ENCODE measurements at regions of chr3 and their contacts with region 1.

Region 1: GRCh38 chr3:122101646-122102045 is 46.5 kb downstream of the CD86 start:
- DNase-seq: no peak
- H3K4me3 ChIP-seq: no peak overlapping the region
- H3K27ac ChIP-seq: no peak overlapping the region
- H3K4me1 ChIP-seq: 0 out of 7 replicates have a peak, but pooled peaks cover 0 to 2% (median 0%) of the 10 kb centered on the region in 4 experiments
- H3K27me3 ChIP-seq: no peaks in the 10 kb centered on the region
- CTCF ChIP-seq: peak in 2 of 3 experiments; percentile 73 to 80; a peak in 3 of 4 replicates
- EP300 ChIP-seq: no peak
- POLR2A ChIP-seq: no peak
- RAD21 ChIP-seq: peak; percentile 93 to 94

Region 2: DNA sequence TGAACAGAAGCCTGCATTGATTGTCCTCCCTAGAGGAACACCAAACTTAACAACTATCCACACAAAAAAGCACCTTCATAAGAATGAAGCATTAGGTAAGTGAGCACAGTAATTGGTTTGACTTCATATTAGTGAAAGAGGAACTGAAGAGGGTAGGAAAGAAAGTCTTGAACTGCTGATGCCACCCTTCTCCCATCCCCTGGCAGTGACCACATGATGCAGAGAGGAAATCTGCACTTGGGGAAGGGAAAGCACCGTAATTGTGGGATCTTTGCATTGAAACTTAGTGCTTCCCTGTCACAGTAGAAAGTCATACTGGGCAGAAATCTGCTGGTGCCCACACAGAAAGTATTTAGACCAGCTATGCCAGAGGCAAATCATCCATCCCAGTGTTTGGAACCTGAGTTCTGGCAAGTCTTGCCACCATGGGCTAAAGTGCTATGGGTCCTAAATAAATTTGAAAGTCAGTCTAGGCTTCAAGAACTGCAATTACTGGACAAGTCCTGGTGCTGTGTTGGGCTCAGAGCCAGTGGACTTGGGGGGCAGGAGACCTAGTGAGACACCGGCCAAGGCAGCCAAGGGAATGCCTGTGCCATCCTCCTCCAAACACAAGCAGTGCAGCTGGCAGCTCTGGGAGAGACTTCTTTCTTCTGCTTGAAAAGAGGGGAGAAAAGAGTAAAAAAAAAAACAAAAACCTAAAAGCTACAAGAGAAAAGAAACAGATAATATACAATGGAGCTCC is 143.8 kb before region 1 on chr3:
- CTCF ChIA-PET with region 1: no interaction called
- POLR2A ChIA-PET with region 1: no interaction called
- DNase-seq: no peak
- H3K4me3 ChIP-seq: no peak overlapping the region
- H3K27ac ChIP-seq: no peak overlapping the region
- H3K4me1 ChIP-seq: peaks cover 0 to 4% (median 2%) of the 10 kb centered on the region in 4 experiments; a peak in 2 of 7 replicates
- H3K27me3 ChIP-seq: no peaks in the 10 kb centered on the region
- CTCF ChIP-seq: no peak
- EP300 ChIP-seq: no peak
- POLR2A ChIP-seq: no peak
- RAD21 ChIP-seq: no peak

Region 3: GRCh38 chr3:122111974-122112373 is 10.3 kb after region 1 on chr3:
- CTCF ChIA-PET with region 1: interaction called, 16 read pairs
- POLR2A ChIA-PET with region 1: no interaction called
- DNase-seq: no peak
- H3K4me3 ChIP-seq: no peak overlapping the region
- H3K27ac ChIP-seq: no peak overlapping the region
- H3K4me1 ChIP-seq: no peaks in the 10 kb centered on the region
- H3K27me3 ChIP-seq: no peaks in the 10 kb centered on the region
- CTCF ChIP-seq: no peak
- EP300 ChIP-seq: no peak
- POLR2A ChIP-seq: no peak
- RAD21 ChIP-seq: no peak

Region 4: GRCh38 chr3:122258757-122259371 is 157.2 kb after region 1 on chr3:
- CTCF ChIA-PET with region 1: interaction called, 113 read pairs
- POLR2A ChIA-PET with region 1: no interaction called
- DNase-seq: peak; percentile 46 to 61
- H3K4me3 ChIP-seq: no peak overlapping the region
- H3K27ac ChIP-seq: no peak overlapping the region
- H3K4me1 ChIP-seq: peaks cover 0 to 2% (median 0%) of the 10 kb centered on the region in 4 experiments; a peak in 1 of 7 replicates
- H3K27me3 ChIP-seq: no peaks in the 10 kb centered on the region; a peak in 1 of 7 replicates
- CTCF ChIP-seq: peak; percentile 67 to 86 (median 75)
- EP300 ChIP-seq: peak in 1 of 2 experiments; percentile 38; a peak in 1 of 3 replicates
- POLR2A ChIP-seq: no peak
- RAD21 ChIP-seq: peak; percentile 96

Region 5: DNA sequence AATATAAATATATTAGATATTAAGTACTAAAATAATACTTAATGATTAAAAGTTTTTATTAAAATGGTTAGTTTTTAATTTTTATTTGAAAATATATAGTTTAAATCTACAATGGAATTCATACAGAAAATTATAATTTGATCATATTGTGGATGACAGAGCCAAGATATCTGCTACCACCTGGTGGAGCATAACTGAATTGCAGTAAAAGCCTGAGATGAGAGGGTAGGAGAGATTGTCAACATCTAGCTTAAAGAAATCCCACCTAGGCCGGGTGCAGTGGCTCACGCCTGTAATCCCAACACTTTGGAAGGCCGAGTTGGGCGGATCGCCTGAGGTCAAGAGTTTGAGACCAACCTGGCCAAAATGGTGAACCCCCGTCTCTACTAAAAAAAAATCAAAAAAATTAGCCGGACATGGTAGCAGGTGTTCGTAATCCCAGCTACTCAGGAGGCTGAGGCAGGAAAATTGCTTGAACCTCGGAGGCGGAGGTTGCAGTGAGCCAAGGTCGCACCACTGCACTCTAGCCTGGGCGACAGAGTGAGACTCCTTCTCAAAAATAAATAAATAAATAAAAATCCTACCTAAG is 198.3 kb after region 1 on chr3:
- CTCF ChIA-PET with region 1: interaction called, 34 read pairs
- POLR2A ChIA-PET with region 1: no interaction called
- DNase-seq: peak; percentile 5 to 59
- H3K4me3 ChIP-seq: no peak overlapping the region
- H3K27ac ChIP-seq: no peak overlapping the region
- H3K4me1 ChIP-seq: no peaks in the 10 kb centered on the region
- H3K27me3 ChIP-seq: no peaks in the 10 kb centered on the region
- CTCF ChIP-seq: peak in 2 of 3 experiments; percentile 47 to 68; a peak in 3 of 4 replicates
- EP300 ChIP-seq: no peak
- POLR2A ChIP-seq: no peak
- RAD21 ChIP-seq: peak; percentile 71 to 75

Region 6: DNA sequence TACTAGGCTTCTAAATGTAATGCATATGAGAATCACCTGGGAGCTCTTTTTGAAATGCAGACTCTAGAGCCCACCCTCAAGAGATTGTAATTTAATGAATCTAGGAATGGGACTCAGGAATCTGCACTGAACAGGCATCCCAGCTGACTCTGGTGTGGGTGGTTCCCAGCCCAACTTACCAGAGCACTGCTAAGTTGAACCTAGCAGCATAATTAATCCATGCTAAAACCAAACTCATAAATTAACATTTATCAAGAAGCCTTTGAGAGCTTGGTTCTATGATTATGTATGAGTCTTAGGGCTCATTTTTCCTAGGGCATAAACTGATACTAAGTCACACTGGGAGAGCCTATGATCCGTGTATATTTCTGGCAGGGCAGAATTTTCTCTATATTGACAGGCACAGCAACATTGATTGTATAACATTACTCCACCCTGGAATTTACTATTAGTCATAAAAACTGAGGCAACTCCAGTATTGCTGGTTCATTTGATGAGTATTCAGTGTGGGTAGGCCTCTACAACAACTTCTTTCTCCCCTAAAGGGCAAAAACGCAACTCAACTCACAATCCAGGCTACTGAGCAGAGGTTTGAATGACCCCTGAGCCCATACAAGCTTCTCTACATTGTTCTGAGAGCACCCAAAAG is 212.7 kb after region 1 on chr3:
- CTCF ChIA-PET with region 1: interaction called, 10 read pairs
- POLR2A ChIA-PET with region 1: no interaction called
- DNase-seq: no peak
- H3K4me3 ChIP-seq: no peak overlapping the region
- H3K27ac ChIP-seq: no peak overlapping the region
- H3K4me1 ChIP-seq: peaks cover 0 to 3% (median 1%) of the 10 kb centered on the region in 4 experiments; a peak in 3 of 7 replicates
- H3K27me3 ChIP-seq: no peaks in the 10 kb centered on the region; a peak in 1 of 7 replicates
- CTCF ChIP-seq: no peak
- EP300 ChIP-seq: no peak
- POLR2A ChIP-seq: no peak
- RAD21 ChIP-seq: no peak

Region 7: GRCh38 chr3:122356415-122356814 is 254.8 kb after region 1 on chr3:
- CTCF ChIA-PET with region 1: interaction called, 35 read pairs
- POLR2A ChIA-PET with region 1: no interaction called
- DNase-seq: peak; percentile 25 to 56
- H3K4me3 ChIP-seq: no peak overlapping the region
- H3K27ac ChIP-seq: no peak overlapping the region
- H3K4me1 ChIP-seq: no peaks in the 10 kb centered on the region
- H3K27me3 ChIP-seq: no peaks in the 10 kb centered on the region
- CTCF ChIP-seq: peak; percentile 48 to 63 (median 53)
- EP300 ChIP-seq: no peak
- POLR2A ChIP-seq: no peak
- RAD21 ChIP-seq: peak; percentile 81 to 84